Activated CD4-positive, alpha-beta T cell treated with anti-CD3 and anti-CD28 coated beads, Interleukin-2, amount 10 ng/mL, durations not matched to agents 24 days and 14 days (primary cell): ENCODE measurements at regions of chr17 and their contacts with region 1.

Region 1: DNA sequence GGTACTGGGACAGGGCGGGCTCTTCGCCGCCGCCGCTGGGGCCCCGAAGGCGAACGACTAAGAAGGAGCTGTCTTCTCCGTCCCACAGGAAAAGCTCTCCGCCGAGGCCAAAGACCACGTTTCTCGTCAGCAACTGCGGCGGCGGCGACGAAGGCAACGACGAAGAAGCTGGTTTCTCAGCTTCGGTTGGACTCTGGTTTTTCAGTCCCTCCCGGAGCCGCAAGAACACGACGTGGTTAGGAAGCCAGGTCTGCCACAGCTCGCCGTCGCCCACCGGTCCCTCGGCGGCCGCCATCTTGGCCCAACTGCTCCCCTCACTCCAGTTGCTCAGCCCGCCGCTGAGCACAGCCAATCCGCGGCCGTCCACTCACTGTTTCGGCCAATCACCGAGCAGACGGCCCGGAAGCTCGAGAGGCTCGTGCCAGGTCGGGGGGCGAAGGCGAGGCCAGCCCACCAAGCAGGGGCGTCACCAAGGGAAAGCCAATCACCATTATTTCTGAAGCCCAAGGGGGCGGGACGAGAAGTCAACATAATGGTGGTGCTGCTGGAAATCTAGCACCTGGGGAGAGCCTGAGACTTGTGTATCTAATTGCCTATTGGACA is at the start of gene NUP88:
- DNase-seq: peak; percentile 99
- H3K4me3 Mint-ChIP-seq: peak within 1 kb of the TSS; percentile 100
- H3K27ac Mint-ChIP-seq: peak within 1 kb of the TSS; percentile 100
- H3K4me1 Mint-ChIP-seq: peaks cover 33% of the 10 kb centered on the region
- H3K27me3 Mint-ChIP-seq: no peaks in the 10 kb centered on the region
- total RNA-seq, gene NUP88: 164 and 168 TPM in 2 replicates

Region 2: DNA sequence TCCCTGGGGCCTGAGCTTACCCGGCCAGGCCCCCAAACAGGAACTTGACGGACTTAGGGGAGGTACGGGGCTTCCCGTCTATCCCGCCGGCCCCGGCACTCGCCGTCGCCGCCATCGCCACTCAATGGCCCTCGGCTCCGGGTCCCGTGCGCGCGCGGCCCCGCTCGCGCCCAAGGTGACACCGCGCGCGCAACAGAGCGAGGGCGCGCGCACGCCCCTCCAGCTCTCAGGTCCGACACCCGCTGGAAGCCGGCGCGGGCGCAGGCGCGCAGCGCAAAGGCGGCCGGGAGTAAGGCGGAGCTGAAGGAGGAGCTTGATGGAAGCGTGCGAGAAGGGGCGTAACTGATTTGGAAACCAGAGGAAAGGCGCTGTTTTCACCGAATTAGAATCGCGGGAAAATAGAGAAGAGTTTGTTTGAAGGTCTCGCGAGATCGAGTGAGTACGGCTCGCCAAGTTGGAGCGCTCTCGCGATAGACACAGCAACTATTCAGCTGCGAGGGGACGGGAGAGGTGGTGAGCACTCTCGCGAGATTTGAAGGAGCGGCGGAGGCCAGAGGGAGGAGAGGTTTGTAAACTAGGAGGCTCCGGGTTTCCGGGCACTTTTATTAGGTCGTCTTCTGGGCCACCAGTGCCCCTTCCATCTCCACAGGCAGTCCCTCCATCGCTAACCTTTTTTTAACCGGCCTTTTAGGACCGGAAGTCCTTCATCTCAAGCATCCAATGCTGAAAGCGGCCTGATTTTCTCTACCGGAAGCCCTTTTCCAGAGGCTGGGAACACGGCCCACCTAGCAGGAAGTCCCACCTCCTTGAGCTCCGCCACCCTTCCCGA is 479.4 kb before region 1 on chr17 and contains the starts of genes RNF167 and SLC25A11:
- intact Hi-C with region 1: loop called (anchors 2 kb)
- DNase-seq: peak; percentile 100
- H3K4me3 Mint-ChIP-seq: peak within 1 kb of the TSS; percentile 95
- H3K27ac Mint-ChIP-seq: peak within 1 kb of the TSS; percentile 92
- H3K4me1 Mint-ChIP-seq: peaks cover 53% of the 10 kb centered on the region
- H3K27me3 Mint-ChIP-seq: no peaks in the 10 kb centered on the region
- total RNA-seq, gene RNF167: 119 and 125 TPM in 2 replicates
- total RNA-seq, gene SLC25A11: 104 and 106 TPM in 2 replicates

Region 3: DNA sequence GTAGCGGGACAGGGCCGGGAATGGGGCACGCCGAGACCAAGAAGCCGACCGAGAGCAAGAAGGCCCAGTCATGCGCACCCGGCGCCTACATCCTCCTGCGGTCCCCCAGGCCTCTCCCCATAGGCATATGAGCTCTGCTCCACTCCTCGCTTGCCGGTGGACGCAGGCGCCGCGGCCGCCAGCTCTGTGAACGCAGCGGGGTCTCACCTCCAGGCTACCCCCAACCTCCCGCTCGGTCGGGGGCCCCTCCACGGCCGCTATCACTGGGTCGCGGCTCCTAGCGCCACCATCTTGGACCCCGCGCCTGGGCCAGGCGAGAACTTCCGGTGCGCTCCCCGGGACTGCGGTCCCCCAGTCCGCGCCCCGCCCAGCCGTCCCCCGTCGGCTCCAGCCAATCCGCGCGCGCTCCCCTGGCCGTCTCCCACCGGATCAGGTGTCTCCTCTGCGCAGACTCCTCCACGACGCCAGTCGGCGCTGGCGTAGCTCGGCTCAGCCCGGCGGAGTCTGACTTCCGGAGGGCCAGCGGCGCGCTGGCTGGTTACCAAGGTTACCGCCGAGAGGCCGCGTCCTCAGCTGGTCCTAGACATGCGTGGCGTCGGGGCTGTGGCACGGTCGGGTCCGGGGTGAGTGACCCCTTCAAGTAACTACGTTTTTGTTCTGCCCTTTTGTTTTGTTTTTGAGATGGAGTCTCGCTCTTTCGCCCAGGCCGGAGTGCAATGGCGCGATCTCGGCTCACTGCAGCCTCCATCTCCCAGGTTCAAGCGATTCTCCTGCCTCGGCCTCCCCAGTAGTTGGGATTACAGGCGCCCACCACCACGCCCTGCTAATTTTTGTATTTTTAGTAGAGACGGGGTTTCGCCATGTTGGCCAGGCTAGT is 227.7 kb before region 1 on chr17 and contains the start of gene ZNF594:
- intact Hi-C with region 1: loop called (anchors 10 kb)
- DNase-seq: peak; percentile 99
- H3K4me3 Mint-ChIP-seq: peak within 1 kb of the TSS; percentile 94
- H3K27ac Mint-ChIP-seq: peak within 1 kb of the TSS; percentile 90
- H3K4me1 Mint-ChIP-seq: peaks cover 21% of the 10 kb centered on the region
- H3K27me3 Mint-ChIP-seq: no peaks in the 10 kb centered on the region
- total RNA-seq, gene ZNF594: 10.1 and 12.1 TPM in 2 replicates

Region 4: DNA sequence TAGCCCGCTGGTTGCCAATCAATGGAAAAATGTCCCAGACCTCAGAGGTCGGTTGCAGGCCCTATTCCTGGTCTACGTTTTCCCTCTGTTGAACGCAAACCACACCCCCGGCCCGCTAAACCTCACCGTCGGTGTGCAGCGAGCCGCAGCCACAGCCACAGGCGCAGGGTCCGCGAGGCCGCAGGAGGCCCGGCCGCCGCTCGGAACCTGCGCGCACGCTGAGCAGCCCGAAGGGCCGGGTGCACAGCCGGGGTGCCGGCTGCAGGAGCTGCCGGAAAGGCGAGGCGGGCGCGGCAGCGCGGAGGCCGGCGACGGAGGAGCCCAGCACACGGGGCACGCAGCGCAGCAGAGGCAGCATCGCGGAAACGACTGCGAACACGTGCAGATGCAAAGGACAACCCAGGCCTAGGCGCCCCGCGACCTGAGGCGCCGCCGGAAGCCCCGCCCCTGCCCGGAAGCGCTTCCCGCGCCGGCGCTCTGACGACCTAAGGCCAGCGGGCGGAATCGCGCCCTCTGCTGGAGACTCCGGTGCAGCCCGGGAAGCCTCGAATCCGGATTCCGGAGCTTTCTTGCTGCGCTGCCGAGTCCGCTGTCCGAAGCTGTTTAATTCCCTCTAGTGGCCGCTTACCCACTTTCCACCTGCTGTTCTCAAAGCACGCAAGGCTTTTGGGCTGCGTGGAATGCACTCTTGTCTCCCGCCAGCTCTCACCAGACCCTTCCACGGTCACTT is 19.4 kb after region 1 on chr17 and contains the start of gene C1QBP:
- intact Hi-C with region 1: loop called (anchors 1 kb)
- DNase-seq: peak; percentile 98
- H3K4me3 Mint-ChIP-seq: peak within 1 kb of the TSS; percentile 94
- H3K27ac Mint-ChIP-seq: peak within 1 kb of the TSS; percentile 88
- H3K4me1 Mint-ChIP-seq: peaks cover 34% of the 10 kb centered on the region
- H3K27me3 Mint-ChIP-seq: no peaks in the 10 kb centered on the region
- total RNA-seq, gene C1QBP: 451 TPM in 2 replicates

Region 5: DNA sequence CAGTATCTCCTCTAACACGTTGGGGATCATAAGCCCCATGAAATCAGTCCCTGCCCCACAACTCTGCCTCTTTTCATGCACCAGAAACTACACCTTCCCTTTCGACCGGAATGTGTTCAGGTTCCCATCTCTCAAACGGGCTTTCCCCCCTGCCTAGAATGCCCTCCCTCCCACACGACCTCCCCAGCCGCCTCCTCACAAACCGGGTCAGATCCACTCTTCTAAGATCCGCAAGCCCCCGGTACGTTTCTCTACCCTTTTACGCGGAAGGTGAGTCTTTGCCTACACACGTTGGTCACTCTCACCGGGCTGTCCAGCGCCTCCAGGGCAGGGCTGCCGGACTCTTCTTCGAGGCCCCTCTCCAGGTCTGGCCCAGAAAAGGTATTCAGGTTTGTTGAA is 48.6 kb after region 1 on chr17:
- intact Hi-C with region 1: loop called (anchors 1 kb)
- DNase-seq: peak; percentile 74
- H3K4me3 Mint-ChIP-seq: peak overlapping the region; percentile 99
- H3K27ac Mint-ChIP-seq: peak overlapping the region; percentile 82
- H3K4me1 Mint-ChIP-seq: peaks cover 37% of the 10 kb centered on the region
- H3K27me3 Mint-ChIP-seq: no peaks in the 10 kb centered on the region

Region 6: GRCh38 chr17:7014261-7014994 is 1595.0 kb after region 1 on chr17:
- intact Hi-C with region 1: loop called (anchors 5 kb)
- DNase-seq: peak; percentile 99
- H3K4me3 Mint-ChIP-seq: peak overlapping the region; percentile 97
- H3K27ac Mint-ChIP-seq: peak overlapping the region; percentile 99
- H3K4me1 Mint-ChIP-seq: peaks cover 56% of the 10 kb centered on the region
- H3K27me3 Mint-ChIP-seq: no peaks in the 10 kb centered on the region